ENCODE measurements at regions of chr3 and their contacts with region 1.

Region 1: GRCh38 chr3:65883613-65884012 is 155.1 kb downstream of the MAGI1 start:
- DNase-seq: no peak
- ATAC-seq: no peak
- H3K4me3 ChIP-seq: no peak overlapping the region
- H3K27ac ChIP-seq: no peak overlapping the region
- H3K4me1 ChIP-seq: peaks cover 0 to 6% of the 10 kb centered on the region in 2 donors
- H3K27me3 ChIP-seq: no peaks in the 10 kb centered on the region

Region 2: GRCh38 chr3:65348398-65348995 is 535.1 kb before region 1 on chr3:
- intact Hi-C with region 1: no loop called
- DNase-seq: no peak
- ATAC-seq: no peak
- H3K4me3 ChIP-seq: no peak overlapping the region
- H3K27ac ChIP-seq: no peak overlapping the region
- H3K4me1 ChIP-seq: no peaks in the 10 kb centered on the region
- H3K27me3 ChIP-seq: no peaks in the 10 kb centered on the region

Region 3: GRCh38 chr3:65524584-65524983 is 359.0 kb before region 1 on chr3:
- intact Hi-C with region 1: no loop called
- DNase-seq: no peak
- ATAC-seq: no peak
- H3K4me3 ChIP-seq: no peak overlapping the region
- H3K27ac ChIP-seq: no peak overlapping the region
- H3K4me1 ChIP-seq: peaks cover 4 to 7% of the 10 kb centered on the region in 2 donors
- H3K27me3 ChIP-seq: no peaks in the 10 kb centered on the region

Region 4: GRCh38 chr3:65831733-65832425 is 51.7 kb before region 1 on chr3:
- intact Hi-C with region 1: loop called in 1 of 2 experiments (anchors 5 kb)
- DNase-seq: no peak
- ATAC-seq: no peak
- H3K4me3 ChIP-seq: no peak overlapping the region
- H3K27ac ChIP-seq: peak overlapping the region in 1 of 2 donors; percentile 44
- H3K4me1 ChIP-seq: peaks cover 3 to 5% of the 10 kb centered on the region in 2 donors
- H3K27me3 ChIP-seq: no peaks in the 10 kb centered on the region

Region 5: GRCh38 chr3:66021731-66022141 is 138.1 kb after region 1 on chr3:
- intact Hi-C with region 1: no loop called
- DNase-seq: no peak
- ATAC-seq: no peak
- H3K4me3 ChIP-seq: no peak overlapping the region
- H3K27ac ChIP-seq: no peak overlapping the region
- H3K4me1 ChIP-seq: peaks cover 1 to 7% of the 10 kb centered on the region in 2 donors
- H3K27me3 ChIP-seq: no peaks in the 10 kb centered on the region

Region 6: GRCh38 chr3:66195347-66195783 is 311.8 kb after region 1 on chr3:
- intact Hi-C with region 1: no loop called
- DNase-seq: peak; percentile 59 to 85
- ATAC-seq: peak; percentile 60
- H3K4me3 ChIP-seq: no peak overlapping the region
- H3K27ac ChIP-seq: no peak overlapping the region
- H3K4me1 ChIP-seq: no peaks in the 10 kb centered on the region
- H3K27me3 ChIP-seq: no peaks in the 10 kb centered on the region

Measured in aorta (tissue), 5 donors.